ENCODE measurements at regions of chr19 and their contacts with region 1.

Region 1: GRCh38 chr19:55653758-55654539 is 886 bp upstream of the U2AF2 start:
- DNase-seq: peak; percentile 98 to 100
- ATAC-seq: peak; percentile 77 to 89 (median 82)
- H3K4me3 ChIP-seq: peak overlapping the region; percentile 78 to 99 (median 90)
- H3K27ac ChIP-seq: peak overlapping the region; percentile 95 to 100 (median 99)
- H3K4me1 ChIP-seq: peaks cover 28 to 54% (median 48%) of the 10 kb centered on the region in 9 donors
- H3K27me3 ChIP-seq: no peaks in the 10 kb centered on the region
- CTCF ChIP-seq: peak; percentile 94 to 100 (median 99)

Region 2: DNA sequence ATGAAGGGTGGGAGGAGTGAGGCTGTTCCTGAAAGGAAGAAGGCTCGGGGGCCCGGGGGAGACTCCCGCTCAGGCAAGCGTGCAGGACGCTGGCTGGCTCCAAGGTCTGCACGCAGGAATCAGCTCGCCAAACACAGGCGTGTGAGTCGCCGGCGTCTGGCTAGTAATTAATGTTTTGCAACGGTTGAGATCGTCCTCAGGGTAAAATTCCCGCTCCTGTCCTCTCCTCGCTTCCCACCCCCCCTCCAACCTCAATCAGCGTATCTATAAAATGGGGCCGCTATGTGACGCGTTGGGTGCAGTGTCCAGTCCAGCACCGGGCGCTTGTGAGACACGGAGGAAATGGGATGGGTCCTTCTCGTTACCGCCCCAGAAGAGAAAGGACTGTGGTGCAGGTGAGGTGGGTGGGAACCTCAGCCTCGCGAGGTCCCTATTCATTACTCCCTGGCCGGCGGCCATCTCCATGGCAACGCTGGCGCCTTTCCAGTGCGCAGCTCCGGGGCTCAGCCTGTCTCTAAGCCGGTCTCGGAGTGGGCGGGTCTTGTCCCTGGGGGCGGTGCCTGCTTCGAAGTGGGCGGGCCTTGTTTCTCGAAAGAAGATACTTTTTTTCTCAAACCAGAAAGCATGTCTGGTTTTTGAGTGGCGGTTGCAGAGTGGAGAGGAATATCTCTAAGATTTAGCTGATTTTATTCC is 66.8 kb before region 1 on chr19:
- intact Hi-C with region 1: no loop called
- DNase-seq: peak; percentile 96 to 97
- ATAC-seq: peak; percentile 86 to 95 (median 92)
- H3K4me3 ChIP-seq: peak overlapping the region in 9 of 10 donors; percentile 21 to 45 (median 42)
- H3K27ac ChIP-seq: peak overlapping the region in 1 of 10 donors; percentile 48
- H3K4me1 ChIP-seq: peaks cover 10 to 30% (median 25%) of the 10 kb centered on the region in 9 donors
- H3K27me3 ChIP-seq: peaks cover 0 to 24% (median 0%) of the 10 kb centered on the region in 7 donors
- CTCF ChIP-seq: no peak

Region 3: GRCh38 chr19:55632463-55632834 is 21.5 kb before region 1 on chr19:
- intact Hi-C with region 1: loop called in 1 of 10 experiments (anchors 1 kb)
- DNase-seq: peak in 1 of 2 donors; percentile 92
- ATAC-seq: peak; percentile 27 to 73 (median 49)
- H3K4me3 ChIP-seq: no peak overlapping the region
- H3K27ac ChIP-seq: peak overlapping the region in 1 of 10 donors; percentile 31
- H3K4me1 ChIP-seq: peaks cover 7 to 37% (median 26%) of the 10 kb centered on the region in 9 donors
- H3K27me3 ChIP-seq: no peaks in the 10 kb centered on the region
- CTCF ChIP-seq: peak; percentile 82 to 94 (median 86)

Region 4: DNA sequence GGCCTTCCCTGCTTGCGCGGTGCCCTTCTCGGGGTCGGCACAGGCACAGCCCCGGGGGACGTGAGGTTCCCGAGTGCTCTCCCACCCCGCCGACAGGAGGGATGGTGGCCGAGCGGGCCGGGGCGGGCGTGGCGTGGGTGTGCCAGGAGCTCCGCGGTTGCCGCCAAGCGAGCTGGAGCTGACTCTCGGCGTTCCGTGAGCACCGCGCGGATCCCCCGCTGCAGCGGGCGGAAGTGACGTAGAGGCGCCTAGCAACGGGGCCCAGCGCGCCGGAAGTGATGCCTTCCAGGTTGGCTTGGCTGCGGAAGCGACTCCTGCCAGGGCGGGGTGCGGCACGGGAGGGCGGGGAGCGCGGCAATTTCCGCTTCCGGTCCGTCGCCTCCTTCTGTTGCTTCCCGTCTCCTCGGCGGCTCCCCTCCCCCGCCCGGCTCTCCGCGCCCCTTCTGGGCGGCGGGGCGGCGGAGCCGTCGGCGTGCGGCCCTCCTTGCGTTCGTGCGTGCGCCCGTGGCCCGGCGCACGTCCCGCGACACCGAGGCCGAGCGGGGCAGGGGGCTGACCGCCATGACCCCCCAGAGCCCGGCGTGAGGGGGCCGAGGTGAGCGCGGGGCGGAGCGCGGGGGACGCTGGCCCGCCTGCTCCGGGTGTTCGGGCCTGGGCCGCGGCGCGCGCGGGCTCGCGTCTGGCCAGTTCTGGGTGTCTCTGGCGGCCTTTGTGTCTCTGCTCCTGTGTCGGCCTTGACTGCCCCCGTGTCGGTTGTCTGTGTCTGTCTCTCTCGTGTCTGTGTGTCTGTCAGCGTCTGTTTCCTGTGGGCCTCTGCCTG is 21.1 kb after region 1 on chr19 and contains the start of gene EPN1:
- intact Hi-C with region 1: loop called in 4 of 10 experiments (anchors 1 to 2 kb)
- DNase-seq: peak; percentile 97 to 98
- ATAC-seq: peak; percentile 88 to 95 (median 93)
- H3K4me3 ChIP-seq: peak within 1 kb of the TSS; percentile 39 to 97 (median 79)
- H3K27ac ChIP-seq: peak within 1 kb of the TSS; percentile 88 to 97 (median 95)
- H3K4me1 ChIP-seq: peaks cover 13 to 64% (median 52%) of the 10 kb centered on the region in 9 donors
- H3K27me3 ChIP-seq: no peaks in the 10 kb centered on the region
- CTCF ChIP-seq: no peak
- total RNA-seq, gene EPN1: 127 to 305 (median 140) TPM

Region 5: GRCh38 chr19:55777528-55777927 is 123.6 kb after region 1 on chr19:
- intact Hi-C with region 1: no loop called
- DNase-seq: no peak
- ATAC-seq: no peak
- H3K4me3 ChIP-seq: no peak overlapping the region
- H3K27ac ChIP-seq: no peak overlapping the region
- H3K4me1 ChIP-seq: no peaks in the 10 kb centered on the region
- H3K27me3 ChIP-seq: peaks cover 0 to 58% (median 6%) of the 10 kb centered on the region in 7 donors
- CTCF ChIP-seq: no peak